GM10248 (cell line): ENCODE measurements at regions of chr3 and their contacts with region 1.

Region 1: DNA sequence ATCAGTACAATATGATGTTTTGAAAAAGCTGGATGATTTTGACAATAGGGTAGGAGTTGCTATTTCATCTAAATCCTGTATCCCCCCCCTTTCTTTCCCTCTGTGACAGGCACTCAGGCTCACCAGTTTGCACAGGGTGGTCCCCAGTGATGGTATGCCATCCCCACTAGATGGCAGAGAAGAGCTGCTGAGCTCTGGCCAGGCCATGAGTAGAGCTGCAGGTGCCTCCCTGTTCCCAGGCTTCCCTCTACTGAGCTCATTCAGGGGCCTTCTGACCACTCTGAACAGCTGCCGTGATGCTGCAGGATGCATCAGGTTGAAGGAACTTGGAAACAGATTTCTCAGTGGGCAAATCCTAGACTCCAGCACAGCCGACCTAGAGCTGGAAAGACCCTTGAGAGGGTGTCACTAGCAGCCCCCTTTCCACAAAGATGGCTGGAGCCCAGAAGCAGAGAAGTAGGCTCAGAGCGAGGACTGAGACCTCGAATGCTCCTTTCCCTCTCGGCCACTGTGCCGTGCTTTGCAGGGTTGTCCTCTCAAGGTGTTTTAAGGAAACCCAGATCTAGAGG is 45.1 kb downstream of the EFCAB12 start:
- DNase-seq: peak; percentile 80
- CTCF ChIP-seq: peak; percentile 76

Region 2: GRCh38 chr3:129289201-129289921 is 94.0 kb before region 1 on chr3:
- CTCF ChIA-PET with region 1: no interaction called
- POLR2A ChIA-PET with region 1: no interaction called
- DNase-seq: no peak
- CTCF ChIP-seq: no peak

Region 3: DNA sequence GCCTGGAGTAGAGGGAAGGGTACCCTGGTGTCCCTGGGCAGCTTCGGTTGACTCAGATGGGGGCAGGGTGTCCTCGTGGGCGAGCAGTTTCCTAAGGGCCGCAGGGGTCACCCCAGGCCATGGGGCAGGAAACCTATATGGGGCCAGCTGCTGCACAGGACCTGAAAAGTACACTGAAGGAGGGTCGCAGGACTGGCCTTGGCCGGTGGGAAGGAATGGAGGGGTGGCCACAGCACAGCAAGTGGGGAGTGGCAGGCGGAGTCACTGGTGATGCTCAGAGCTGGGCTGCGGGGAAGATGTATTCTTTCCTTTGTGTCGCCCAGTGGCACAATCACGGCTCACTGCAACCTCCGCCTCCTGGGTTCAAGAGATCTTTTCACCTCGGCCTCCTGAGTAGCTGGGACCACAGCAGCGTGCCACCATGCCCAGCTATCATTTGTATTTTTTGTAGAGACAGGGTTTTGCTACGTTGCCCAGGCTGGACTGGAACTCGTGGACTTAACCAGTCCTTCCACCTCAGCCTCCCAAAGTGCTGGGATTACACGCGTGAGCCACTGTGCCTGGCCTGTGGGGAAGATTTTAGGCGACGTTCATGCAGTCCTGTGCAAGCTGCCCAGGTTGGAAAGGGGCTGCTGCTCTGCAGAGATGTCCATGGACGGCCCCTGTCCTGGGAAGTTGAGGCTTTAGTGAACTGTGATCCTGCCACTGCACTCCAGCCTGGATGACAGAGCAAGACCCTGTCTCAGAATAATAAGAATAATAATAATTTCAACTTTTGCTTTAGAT is 12.1 kb before region 1 on chr3:
- CTCF ChIA-PET with region 1: interaction called, 11 read pairs
- POLR2A ChIA-PET with region 1: no interaction called
- DNase-seq: no peak
- CTCF ChIP-seq: no peak

Region 4: DNA sequence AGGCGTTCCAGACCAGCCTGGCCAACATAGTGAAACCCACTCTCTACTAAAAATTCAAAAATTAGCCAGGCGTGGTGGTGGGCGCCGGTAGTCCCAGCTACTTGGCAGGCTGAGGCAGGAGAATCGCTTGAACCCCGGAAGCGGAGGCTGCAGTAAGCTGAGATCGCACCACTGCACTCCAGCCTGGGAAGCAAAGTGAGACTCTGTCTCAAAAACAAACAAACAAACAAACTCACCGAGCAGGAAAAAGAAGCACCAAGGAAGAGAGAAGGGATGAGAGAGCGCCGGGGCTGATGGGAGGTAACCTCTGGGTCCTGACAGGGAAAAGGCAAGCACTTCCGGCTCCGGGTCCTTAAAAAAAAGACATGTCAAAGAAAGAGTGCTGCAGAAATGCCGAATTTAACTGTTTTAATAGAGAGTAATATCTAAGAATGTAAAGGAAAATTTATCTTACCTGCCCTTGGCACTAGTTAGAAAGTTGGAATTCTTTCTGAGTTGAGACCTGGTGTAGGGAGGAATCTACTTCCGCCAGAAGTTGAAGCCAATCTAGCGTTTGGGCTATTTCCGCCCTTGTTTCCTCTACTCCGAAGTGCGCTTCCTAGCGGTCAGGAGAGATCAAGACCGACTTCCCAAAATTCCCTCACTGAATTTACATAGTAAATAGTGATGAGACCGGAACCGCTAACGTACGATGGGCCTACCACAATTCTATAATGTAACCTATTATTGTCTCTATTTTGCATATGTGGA is 15.9 kb after region 1 on chr3:
- CTCF ChIA-PET with region 1: interaction called, 15 read pairs
- POLR2A ChIA-PET with region 1: no interaction called
- DNase-seq: peak; percentile 84
- CTCF ChIP-seq: peak; percentile 78

Region 5: DNA sequence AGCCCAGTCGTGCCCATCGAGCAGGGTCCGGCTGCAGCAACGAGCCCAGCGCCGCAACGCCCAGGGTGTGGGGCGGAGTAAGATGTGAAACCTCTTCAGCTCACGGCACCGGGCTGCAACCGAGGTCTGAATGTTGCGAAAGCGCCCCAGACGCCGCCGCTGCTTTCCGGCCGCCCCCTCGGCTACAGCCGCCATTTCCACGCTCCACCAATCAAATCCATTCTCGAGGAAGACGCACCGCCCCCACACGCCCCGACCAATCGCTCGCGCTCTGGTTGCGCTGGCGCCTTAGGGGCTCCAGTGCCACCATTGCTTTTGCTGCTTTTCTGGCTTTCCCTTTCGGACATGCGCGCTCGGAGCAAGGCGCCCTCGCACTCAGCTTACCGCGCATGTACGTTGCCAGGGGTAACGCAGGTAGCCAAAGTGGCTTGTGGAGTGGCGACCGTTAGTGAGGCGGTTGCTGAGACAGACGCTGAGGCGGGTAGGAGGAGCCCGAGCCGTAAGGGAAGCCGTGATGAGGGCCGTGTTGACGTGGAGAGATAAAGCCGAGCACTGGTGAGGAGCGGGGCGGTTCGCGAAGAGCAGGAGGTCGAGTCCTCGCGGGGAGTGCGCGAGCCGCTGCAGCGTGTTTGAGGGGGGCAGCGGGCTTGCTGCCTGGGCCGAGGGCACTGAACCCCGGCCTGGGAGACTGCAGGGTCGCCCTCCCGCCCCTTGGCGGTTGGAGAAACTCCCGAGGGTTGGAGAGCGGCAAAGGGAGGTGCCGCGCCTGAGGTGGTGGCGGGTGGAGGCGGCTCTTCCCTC is 56.6 kb after region 1 on chr3 and contains the starts of genes IFT122 and MBD4:
- CTCF ChIA-PET with region 1: interaction called, 17 read pairs
- POLR2A ChIA-PET with region 1: no interaction called
- DNase-seq: peak; percentile 98
- CTCF ChIP-seq: no peak